GM10248 (cell line): ENCODE measurements at regions of chr12 and their contacts with region 1.

Region 1: DNA sequence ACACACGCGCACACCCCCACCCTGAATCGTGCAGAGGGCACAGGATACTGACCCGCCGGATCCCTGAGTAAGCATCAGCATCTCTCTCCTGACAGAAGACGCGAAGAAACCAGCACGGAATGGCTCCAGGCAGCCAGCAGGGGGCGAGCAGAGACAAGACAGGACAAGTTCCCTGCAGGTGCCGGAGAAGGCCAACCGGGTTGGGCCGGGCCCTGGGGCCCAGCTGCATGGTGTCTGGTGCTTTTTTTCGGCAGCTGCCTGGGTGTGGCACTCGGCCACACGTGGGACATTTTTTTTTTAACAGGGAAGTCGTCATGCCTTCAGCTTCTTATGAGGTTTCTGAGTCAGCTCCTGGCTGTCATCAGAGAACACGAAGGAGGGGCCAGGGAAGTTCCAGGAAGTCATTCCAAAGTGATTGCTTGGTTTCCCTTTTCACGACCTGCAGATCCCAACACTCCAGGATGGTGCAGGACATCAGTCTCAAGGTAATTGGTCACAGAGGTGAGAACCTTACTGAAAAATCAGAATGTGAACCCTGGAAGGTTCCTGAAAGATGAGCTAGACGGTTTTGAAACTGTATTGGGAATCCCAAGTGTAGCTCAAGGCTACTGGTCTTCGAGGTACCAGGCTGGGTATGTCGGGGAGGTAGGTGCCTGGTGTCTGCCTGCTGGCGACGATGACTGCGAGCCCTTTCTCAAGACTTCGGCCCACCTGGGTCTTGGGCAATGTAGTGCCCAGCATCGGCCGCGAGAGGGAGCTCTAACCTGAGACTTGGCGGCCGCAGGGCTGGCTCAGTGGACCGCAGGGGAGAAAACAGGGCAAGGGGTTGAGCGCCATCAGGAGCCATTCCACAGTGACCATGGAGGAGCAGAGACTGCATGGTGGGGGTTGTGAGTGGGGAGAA is 190.8 kb upstream of the PRMT8 start:
- DNase-seq: peak; percentile 83
- CTCF ChIP-seq: peak; percentile 95

Region 2: DNA sequence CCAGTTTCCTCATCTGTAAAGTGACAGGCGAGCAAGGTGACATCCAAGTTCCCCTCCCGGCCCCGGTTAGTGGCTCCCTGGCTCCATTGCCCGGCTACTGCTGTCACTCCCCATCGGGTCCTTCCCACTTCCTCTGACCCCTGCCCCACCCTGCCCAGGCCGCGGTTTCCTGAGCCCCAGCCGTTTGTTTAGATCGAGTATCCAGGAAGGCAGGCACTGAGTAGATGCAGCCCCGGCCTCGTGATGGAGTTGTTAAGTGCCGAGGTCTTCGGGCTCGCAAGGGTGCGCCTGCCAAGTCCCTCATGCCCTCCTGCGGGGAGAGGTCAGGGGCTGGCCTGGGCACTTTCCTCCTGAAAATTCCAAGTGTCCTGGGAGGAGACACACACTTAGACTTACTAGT is 285.5 kb before region 1 on chr12:
- CTCF ChIA-PET with region 1: no interaction called
- POLR2A ChIA-PET with region 1: no interaction called
- DNase-seq: no peak
- CTCF ChIP-seq: no peak

Region 3: DNA sequence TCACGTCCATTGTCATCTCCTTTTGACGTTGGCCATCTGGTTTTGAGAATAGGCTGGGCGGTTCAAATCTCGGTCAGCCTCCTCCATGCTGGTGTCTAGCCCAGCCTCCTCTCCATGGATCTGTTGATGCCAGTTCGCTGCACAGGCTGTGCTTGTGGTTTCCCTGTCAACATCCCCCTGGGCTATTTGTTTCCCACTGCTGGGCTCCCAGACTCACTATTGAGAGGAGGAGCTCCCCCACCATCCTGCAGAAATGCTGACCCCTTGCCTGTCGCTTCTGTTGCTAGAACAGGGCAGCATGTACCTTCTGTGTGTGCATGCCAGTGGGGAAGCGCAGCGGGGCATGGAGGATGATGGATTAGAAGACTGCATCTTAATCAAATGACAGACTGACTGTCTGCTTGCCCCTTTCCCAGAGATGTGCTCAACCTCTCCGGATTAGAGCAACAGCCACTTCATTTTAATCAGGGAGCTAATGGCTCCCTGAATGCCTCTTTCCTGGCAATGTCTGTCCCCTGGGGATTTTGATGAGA is 52.5 kb before region 1 on chr12:
- CTCF ChIA-PET with region 1: no interaction called
- POLR2A ChIA-PET with region 1: no interaction called
- DNase-seq: no peak
- CTCF ChIP-seq: no peak

Region 4: DNA sequence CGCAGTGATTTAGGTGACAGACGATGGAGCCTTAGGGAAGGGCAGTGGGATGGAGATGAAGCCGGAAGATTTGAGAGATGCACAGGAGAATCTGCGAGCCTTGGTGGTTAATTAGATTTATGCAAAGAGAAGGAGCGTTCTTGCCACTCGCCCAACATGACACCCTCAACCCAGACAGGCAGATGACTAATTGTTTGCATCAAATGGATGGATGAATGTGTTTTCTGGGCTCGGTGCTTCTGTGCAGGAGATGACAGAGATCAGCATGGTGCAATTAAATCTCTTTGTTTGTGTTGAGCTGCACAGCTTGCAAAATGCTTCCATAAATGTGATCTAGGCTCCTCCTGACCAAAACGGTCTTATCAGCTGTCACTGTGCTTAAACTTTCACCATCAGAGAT is 11.5 kb before region 1 on chr12:
- CTCF ChIA-PET with region 1: interaction called, 45 read pairs
- POLR2A ChIA-PET with region 1: no interaction called
- DNase-seq: no peak
- CTCF ChIP-seq: no peak

Region 5: GRCh38 chr12:3333583-3333982 is 33.4 kb after region 1 on chr12:
- CTCF ChIA-PET with region 1: interaction called, 11 read pairs
- POLR2A ChIA-PET with region 1: no interaction called
- DNase-seq: no peak
- CTCF ChIP-seq: no peak

Region 6: DNA sequence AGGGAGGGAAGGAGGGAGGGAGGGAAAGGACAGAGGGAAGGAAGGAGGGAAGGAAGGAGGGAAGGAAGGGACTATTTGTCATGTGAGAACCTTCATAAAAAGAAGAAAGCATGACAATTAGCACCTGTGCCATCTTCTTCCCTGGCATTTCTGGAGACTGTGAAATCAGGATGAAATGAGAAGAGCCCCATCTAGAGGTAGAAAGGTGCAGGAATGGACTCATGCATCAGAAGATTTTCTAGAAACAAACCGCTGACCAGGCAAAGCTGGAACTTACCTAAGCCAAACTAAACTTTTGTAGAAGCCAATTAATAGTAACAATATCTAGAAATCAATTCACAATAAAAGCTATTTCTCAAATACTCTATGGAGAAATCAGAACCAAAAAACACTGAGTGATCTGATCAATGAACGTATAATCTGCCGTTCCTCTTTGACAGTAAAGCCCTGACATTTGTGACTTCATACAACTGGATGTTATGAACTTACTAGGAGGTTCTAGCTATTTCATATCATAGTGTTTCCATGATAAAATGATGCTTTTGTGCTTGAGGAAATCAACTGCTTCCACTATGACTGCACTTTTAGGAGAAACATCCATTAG is 477.1 kb after region 1 on chr12:
- CTCF ChIA-PET with region 1: interaction called, 29 read pairs
- POLR2A ChIA-PET with region 1: no interaction called
- DNase-seq: peak; percentile 34
- CTCF ChIP-seq: peak; percentile 51

Region 7: DNA sequence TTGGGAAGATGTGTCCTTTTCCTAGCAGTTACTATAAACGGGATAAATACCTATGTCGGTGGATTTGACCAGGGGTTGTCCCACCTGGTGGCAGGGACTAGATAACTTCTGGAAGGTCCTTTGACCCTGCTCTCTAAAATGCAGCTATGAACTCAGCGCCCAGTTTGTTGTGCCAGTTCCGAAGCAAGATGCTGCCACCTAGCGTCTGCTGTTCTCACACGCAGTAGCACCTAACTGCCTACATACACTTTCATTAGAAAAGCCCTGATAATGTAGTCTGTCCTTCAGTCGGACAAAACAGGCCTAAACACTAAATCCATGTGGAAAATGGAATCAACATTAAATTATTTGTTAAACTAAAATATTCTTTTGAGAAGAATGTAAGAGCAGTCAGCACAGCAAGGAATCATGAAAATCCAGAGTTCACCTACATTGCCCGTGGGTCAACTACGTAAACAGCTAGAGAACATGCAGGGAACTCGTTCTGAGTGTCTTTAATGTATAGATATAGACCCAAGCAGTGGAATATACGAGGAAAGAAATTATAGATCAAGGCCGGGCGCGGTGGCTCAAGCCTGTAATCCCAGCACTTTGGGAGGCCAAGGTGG is 503.8 kb after region 1 on chr12:
- CTCF ChIA-PET with region 1: interaction called, 197 read pairs
- POLR2A ChIA-PET with region 1: interaction called, 3 read pairs
- DNase-seq: peak; percentile 63
- CTCF ChIP-seq: peak; percentile 95

Region 8: DNA sequence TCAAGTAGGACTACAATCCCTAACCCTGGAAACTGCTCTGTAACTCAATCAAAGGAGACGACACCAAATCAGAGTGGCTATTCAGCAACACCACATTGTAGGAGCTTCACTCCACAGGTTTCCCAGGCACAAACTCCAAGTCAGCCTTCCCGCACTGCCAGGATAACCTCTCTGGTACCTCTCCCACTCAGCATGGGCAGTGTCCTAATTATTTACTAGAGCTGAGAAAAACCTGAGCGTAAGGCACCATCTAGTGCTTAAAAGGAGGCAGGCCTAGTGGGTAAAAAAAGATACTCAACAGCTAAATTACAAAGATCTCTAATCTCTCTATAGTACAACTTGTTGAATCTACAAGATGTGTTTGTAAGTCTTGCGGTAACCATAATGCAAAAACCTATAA is 536.9 kb after region 1 on chr12:
- CTCF ChIA-PET with region 1: interaction called, 35 read pairs
- POLR2A ChIA-PET with region 1: no interaction called
- DNase-seq: peak; percentile 29
- CTCF ChIP-seq: peak; percentile 31

Region 9: DNA sequence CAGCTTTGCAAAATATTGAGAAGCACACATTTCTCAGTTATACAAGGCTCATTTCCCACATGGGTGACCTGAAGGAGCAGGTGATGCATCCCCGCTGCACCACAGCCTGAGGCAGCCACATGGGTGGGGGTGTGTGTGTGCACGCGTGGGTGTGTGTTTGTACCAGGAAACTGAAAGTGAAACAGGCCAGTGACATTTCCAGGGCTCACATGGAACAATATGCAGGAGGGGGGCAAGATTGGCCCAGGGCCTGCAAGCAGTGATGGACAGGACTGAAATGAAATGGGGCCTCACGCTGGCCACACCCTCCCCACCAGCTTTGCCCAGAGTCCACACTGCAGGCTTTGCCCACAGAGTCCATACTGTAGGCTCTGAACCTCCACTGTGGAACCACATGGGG is 727.2 kb after region 1 on chr12:
- CTCF ChIA-PET with region 1: no interaction called
- POLR2A ChIA-PET with region 1: no interaction called
- DNase-seq: no peak
- CTCF ChIP-seq: no peak